PC-3 (cell line): ENCODE measurements at regions of chr4 and their contacts with region 1.

Region 1: GRCh38 chr4:150098214-150098613 is 20.0 kb downstream of the DCLK2 start:
- DNase-seq: no peak
- ATAC-seq: no peak
- H3K4me3 ChIP-seq: no peak overlapping the region
- H3K27ac ChIP-seq: no peak overlapping the region
- H3K4me1 ChIP-seq: no peaks in the 10 kb centered on the region
- H3K27me3 ChIP-seq: no peaks in the 10 kb centered on the region
- CTCF ChIP-seq: no peak

Region 2: GRCh38 chr4:150140774-150141400 is 42.7 kb after region 1 on chr4:
- CTCF ChIA-PET with region 1: no interaction called
- POLR2A ChIA-PET with region 1: no interaction called
- intact Hi-C with region 1: loop called (anchors 10 kb)
- DNase-seq: peak; percentile 78
- ATAC-seq: peak; percentile 49
- H3K4me3 ChIP-seq: peak overlapping the region; percentile 60
- H3K27ac ChIP-seq: peak overlapping the region; percentile 84
- H3K4me1 ChIP-seq: peaks cover 47% of the 10 kb centered on the region
- H3K27me3 ChIP-seq: no peaks in the 10 kb centered on the region
- CTCF ChIP-seq: no peak